Activated B cell treated with CpG ODN at 0.5 μM for 24 hours (primary cell): ENCODE measurements at regions of chr11 and their contacts with region 1.

Region 1: GRCh38 chr11:6443269-6444003 is 2.6 kb upstream of the HPX start:
- DNase-seq: peak; percentile 28
- ATAC-seq: peak; percentile 90
- H3K4me3 Mint-ChIP-seq: no peak overlapping the region
- H3K27ac Mint-ChIP-seq: no peak overlapping the region
- H3K4me1 Mint-ChIP-seq: no peaks in the 10 kb centered on the region
- H3K27me3 Mint-ChIP-seq: no peaks in the 10 kb centered on the region
- CTCF ChIP-seq: peak; percentile 28

Region 2: GRCh38 chr11:6251120-6251733 is 192.2 kb before region 1 on chr11:
- CTCF ChIA-PET with region 1: interaction called, 4 read pairs
- POLR2A ChIA-PET with region 1: no interaction called
- intact Hi-C with region 1: loop called (anchors 1 kb)
- DNase-seq: no peak
- ATAC-seq: peak; percentile 64
- H3K4me3 Mint-ChIP-seq: no peak overlapping the region
- H3K27ac Mint-ChIP-seq: no peak overlapping the region
- H3K4me1 Mint-ChIP-seq: no peaks in the 10 kb centered on the region
- H3K27me3 Mint-ChIP-seq: no peaks in the 10 kb centered on the region
- CTCF ChIP-seq: no peak

Region 3: GRCh38 chr11:6402561-6402981 is 40.9 kb before region 1 on chr11:
- CTCF ChIA-PET with region 1: interaction called, 11 read pairs
- POLR2A ChIA-PET with region 1: no interaction called
- intact Hi-C with region 1: no loop called
- DNase-seq: peak; percentile 30
- ATAC-seq: peak; percentile 90
- H3K4me3 Mint-ChIP-seq: peak overlapping the region; percentile 75
- H3K27ac Mint-ChIP-seq: peak overlapping the region; percentile 85
- H3K4me1 Mint-ChIP-seq: peaks cover 53% of the 10 kb centered on the region
- H3K27me3 Mint-ChIP-seq: no peaks in the 10 kb centered on the region
- CTCF ChIP-seq: no peak

Region 4: GRCh38 chr11:6419009-6419631 is 24.3 kb before region 1 on chr11 and contains the start of gene APBB1:
- CTCF ChIA-PET with region 1: interaction called, 10 read pairs
- POLR2A ChIA-PET with region 1: interaction called, 6 read pairs
- intact Hi-C with region 1: no loop called
- DNase-seq: peak; percentile 76
- ATAC-seq: peak; percentile 80
- H3K4me3 Mint-ChIP-seq: peak within 1 kb of the TSS; percentile 80
- H3K27ac Mint-ChIP-seq: peak within 1 kb of the TSS; percentile 71
- H3K4me1 Mint-ChIP-seq: peaks cover 4% of the 10 kb centered on the region
- H3K27me3 Mint-ChIP-seq: peaks cover 27% of the 10 kb centered on the region
- CTCF ChIP-seq: no peak
- total RNA-seq, gene APBB1: 20.6 and 22.1 TPM in 2 replicates

Region 5: DNA sequence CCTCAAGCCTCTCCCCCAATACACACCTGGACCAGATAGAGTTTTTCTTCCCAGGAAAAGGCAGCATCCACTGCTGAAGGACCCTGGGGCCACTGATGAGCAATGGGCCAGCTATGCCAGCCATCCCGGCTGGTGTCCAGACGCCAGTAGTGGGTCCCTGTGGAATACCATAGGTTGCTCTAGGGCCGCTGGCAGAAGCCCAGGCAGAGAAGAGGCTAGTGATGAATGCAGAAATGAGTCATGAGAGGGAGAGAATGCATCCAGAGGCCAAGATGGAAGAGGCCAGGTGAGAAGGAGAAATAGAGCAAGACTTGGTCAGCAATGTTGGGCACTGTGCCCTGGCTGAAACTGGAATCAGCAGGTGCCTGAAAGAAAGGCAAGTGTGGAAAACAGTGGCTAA is 11.6 kb before region 1 on chr11:
- CTCF ChIA-PET with region 1: interaction called, 12 read pairs
- POLR2A ChIA-PET with region 1: no interaction called
- intact Hi-C with region 1: loop called (anchors 2 kb)
- DNase-seq: no peak
- ATAC-seq: no peak
- H3K4me3 Mint-ChIP-seq: no peak overlapping the region
- H3K27ac Mint-ChIP-seq: no peak overlapping the region
- H3K4me1 Mint-ChIP-seq: peaks cover 3% of the 10 kb centered on the region
- H3K27me3 Mint-ChIP-seq: no peaks in the 10 kb centered on the region
- CTCF ChIP-seq: no peak

Region 6: GRCh38 chr11:6505577-6506240 is 62.3 kb after region 1 on chr11:
- CTCF ChIA-PET with region 1: interaction called, 13 read pairs
- POLR2A ChIA-PET with region 1: no interaction called
- intact Hi-C with region 1: loop called (anchors 1 kb)
- DNase-seq: no peak
- ATAC-seq: peak; percentile 37
- H3K4me3 Mint-ChIP-seq: no peak overlapping the region
- H3K27ac Mint-ChIP-seq: no peak overlapping the region
- H3K4me1 Mint-ChIP-seq: no peaks in the 10 kb centered on the region
- H3K27me3 Mint-ChIP-seq: no peaks in the 10 kb centered on the region
- CTCF ChIP-seq: no peak

Region 7: DNA sequence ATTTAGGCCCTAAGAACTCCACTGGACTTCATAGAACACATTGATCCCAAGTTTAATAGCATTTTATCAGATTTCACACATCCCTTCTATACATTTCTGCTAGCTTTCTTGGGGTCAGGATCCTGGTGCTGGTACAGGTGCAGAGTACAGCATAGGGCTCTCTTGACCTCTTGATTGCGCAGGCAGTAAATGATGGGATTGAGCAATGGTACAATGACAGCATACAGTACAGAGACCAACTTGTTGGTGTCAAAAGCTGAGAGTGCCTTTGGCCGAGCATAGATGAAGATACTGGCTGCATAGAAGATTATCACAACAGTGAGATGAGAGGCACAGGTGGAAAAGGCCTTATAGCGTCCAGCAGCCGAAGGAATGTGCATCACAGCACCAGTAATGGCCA is 351.2 kb after region 1 on chr11:
- CTCF ChIA-PET with region 1: no interaction called
- POLR2A ChIA-PET with region 1: no interaction called
- intact Hi-C with region 1: no loop called
- DNase-seq: no peak
- ATAC-seq: no peak
- H3K4me3 Mint-ChIP-seq: no peak overlapping the region
- H3K27ac Mint-ChIP-seq: no peak overlapping the region
- H3K4me1 Mint-ChIP-seq: no peaks in the 10 kb centered on the region
- H3K27me3 Mint-ChIP-seq: no peaks in the 10 kb centered on the region
- CTCF ChIP-seq: no peak

Region 8: DNA sequence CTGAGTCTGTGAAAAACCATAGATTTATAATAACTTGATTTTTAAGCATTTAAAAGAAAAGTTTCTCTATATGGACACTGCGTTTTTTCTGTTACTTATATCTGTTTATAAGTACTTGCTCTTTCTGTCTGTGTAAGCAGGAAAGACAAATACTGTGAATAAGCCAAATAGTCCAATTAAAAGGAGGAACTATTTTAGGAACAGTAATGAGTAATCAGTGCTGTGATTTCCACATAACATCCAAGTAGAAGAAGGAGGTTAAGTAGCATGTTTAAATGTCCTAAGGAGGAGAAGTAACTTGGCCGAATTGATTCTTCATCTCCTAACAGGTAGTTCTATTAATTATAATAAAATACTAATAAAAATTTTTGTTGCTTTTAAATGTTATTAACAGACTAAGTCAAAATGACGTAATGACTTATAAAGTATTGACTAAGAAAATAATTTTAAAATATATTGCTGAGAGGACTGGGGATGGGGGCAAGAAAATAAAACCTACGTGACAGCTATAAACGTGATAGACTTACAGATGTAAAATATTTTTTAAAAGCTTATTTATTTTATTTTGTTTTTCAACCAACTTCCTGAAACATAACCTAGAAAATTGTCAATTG is 536.0 kb after region 1 on chr11:
- CTCF ChIA-PET with region 1: no interaction called
- POLR2A ChIA-PET with region 1: no interaction called
- intact Hi-C with region 1: no loop called
- DNase-seq: no peak
- ATAC-seq: no peak
- H3K4me3 Mint-ChIP-seq: no peak overlapping the region
- H3K27ac Mint-ChIP-seq: no peak overlapping the region
- H3K4me1 Mint-ChIP-seq: no peaks in the 10 kb centered on the region
- H3K27me3 Mint-ChIP-seq: no peaks in the 10 kb centered on the region
- CTCF ChIP-seq: no peak